ENCODE measurements at regions of chrX and their contacts with region 1.

Region 1: GRCh38 chrX:18390941-18391538 is 34.4 kb upstream of the CDKL5 start:
- DNase-seq: peak; percentile 37
- H3K4me3 ChIP-seq: no peak overlapping the region
- H3K27ac ChIP-seq: no peak overlapping the region
- H3K4me1 ChIP-seq: no peaks in the 10 kb centered on the region
- H3K27me3 ChIP-seq: no peaks in the 10 kb centered on the region
- CTCF ChIP-seq: peak; percentile 68

Region 2: GRCh38 chrX:18377796-18378195 is 13.2 kb before region 1 on chrX:
- intact Hi-C with region 1: no loop called
- DNase-seq: no peak
- H3K4me3 ChIP-seq: no peak overlapping the region
- H3K27ac ChIP-seq: no peak overlapping the region
- H3K4me1 ChIP-seq: no peaks in the 10 kb centered on the region
- H3K27me3 ChIP-seq: no peaks in the 10 kb centered on the region
- CTCF ChIP-seq: peak; percentile 50

Region 3: GRCh38 chrX:19334945-19335626 is 944.0 kb after region 1 on chrX:
- intact Hi-C with region 1: loop called (anchors 5 kb)
- DNase-seq: no peak
- H3K4me3 ChIP-seq: no peak overlapping the region
- H3K27ac ChIP-seq: no peak overlapping the region
- H3K4me1 ChIP-seq: peaks cover 7% of the 10 kb centered on the region
- H3K27me3 ChIP-seq: no peaks in the 10 kb centered on the region
- CTCF ChIP-seq: no peak